Endothelial cell of umbilical vein (primary cell): ENCODE measurements at regions of chr11 and their contacts with region 1.

Region 1: DNA sequence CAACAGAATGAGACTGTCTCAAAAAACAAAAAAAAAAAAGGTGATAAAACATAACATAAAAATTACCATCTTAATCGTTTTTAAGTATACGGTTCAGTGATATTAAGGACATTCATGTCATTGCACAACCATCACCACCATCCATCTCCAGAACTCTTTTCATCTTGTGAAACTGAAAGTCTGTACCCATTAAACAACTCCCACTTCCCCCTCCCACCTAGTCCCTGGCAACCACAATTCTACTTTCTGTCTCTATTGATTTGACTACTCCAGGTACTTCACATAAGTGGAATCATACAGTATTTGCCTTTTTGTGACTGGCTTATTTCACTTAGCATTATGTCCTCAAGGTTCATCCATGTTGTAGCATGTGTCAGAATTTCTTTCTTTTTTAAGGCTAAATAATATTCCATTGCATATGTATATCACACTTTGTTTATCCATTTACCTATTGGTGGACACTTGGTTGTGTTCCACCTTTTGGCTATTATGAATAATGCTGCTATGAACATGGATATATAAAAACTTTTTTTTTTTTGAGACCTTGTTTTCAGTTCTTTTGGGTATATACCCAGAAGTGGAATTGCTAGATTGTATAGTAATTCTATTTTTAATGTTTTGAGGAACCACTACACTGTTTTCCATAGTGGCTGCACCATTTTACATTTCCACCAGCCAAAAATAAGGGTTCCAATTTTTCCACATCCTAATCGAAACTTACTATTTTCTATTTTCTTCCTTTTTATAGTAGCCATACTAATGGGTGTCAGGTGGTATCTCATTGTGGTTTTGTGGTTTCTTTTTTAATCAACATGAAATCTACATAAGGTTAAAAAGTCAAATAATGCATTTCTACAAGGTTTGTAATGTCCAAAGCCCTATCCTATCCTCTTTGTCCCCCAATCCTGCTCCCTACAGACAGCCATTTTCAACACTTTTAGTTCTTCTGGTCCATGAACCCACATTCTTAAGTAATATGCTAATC is 23.4 kb upstream of the PIK3C2A start:
- DNase-seq: no peak
- H3K4me3 ChIP-seq: no peak overlapping the region
- H3K27ac ChIP-seq: no peak overlapping the region
- H3K4me1 ChIP-seq: peaks cover 3% of the 10 kb centered on the region
- H3K27me3 ChIP-seq: no peaks in the 10 kb centered on the region
- CTCF ChIP-seq: no peak
- POLR2A ChIP-seq: no peak

Region 2: DNA sequence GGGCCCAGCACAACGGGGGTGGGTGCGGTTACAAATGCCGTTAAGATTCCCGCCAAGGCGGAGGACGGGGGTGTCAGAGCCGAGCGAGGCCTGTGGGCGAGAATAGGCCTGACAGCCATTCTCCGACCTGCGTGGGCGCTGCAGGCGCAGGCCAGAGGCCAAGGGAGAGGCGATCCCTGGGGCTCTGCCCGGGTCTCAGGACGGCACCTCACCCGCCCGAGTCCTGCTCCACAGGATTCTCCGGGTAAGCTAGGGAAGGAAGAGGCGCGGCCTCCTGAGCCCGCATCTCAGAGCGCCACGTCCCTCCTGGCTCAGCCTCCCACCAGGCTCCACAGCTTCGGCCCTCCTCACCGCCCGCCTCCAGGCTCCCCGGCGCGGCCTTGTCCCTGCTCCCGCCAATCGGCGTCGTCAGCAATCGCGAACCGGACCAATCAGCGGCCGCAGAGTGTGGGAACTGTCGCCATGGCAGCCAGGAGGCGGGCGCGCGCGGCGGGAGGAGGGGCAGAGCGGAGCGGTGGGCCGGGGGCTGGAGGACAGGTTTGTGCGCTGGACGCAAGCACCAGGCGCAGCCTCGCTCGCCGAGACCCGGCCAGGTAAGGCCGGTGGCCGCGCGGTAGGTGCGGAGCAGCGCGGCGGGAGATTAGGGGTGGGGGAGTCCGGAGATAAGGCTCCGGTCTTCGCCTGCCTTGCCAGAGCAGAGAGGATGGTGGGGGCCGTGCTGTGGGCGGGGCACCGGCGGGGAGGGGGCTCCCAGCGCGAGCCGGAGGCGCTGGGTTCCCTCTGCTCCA is 45.3 kb after region 1 on chr11 and contains the start of gene NUCB2:
- CTCF ChIA-PET with region 1: interaction called, 14 read pairs
- POLR2A ChIA-PET with region 1: no interaction called
- dilution Hi-C with region 1: no loop called
- intact Hi-C with region 1: loop called (anchors 1 kb)
- DNase-seq: peak; percentile 98
- H3K4me3 ChIP-seq: peak within 1 kb of the TSS; percentile 84 to 95 (median 95)
- H3K27ac ChIP-seq: peak within 1 kb of the TSS; percentile 65
- H3K4me1 ChIP-seq: peaks cover 11% of the 10 kb centered on the region
- H3K27me3 ChIP-seq: no peaks in the 10 kb centered on the region
- CTCF ChIP-seq: no peak
- POLR2A ChIP-seq: peak; percentile 97
- total RNA-seq, gene NUCB2: 114 and 123 TPM in 2 replicates

Region 3: DNA sequence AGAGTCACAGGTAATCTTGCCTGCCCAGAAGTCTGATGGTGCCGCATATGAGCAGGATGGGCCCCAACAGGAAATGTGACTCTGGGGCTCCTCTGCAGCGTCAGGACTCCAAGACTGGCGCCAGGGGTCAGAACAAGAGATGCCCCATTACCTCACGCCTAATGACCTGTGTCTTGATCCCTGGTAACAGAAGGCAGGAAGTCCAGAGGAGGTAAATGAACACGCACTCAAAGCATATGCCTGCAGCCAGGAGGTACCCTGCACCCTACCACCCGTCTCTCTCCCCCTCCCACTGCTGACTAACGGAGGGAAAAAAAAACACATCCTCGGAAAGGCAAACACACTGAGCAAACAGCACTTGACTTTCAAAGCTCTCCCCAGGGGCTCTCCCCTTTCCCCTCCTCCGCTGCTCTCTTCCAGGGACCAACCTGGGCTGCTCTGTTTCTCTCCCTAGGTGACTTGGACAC is 208.2 kb after region 1 on chr11:
- CTCF ChIA-PET with region 1: no interaction called
- POLR2A ChIA-PET with region 1: no interaction called
- dilution Hi-C with region 1: no loop called
- intact Hi-C with region 1: no loop called
- DNase-seq: no peak
- H3K4me3 ChIP-seq: no peak overlapping the region
- H3K27ac ChIP-seq: no peak overlapping the region
- H3K4me1 ChIP-seq: no peaks in the 10 kb centered on the region
- H3K27me3 ChIP-seq: peaks cover 0 to 6% of the 10 kb centered on the region in 2 experiments
- CTCF ChIP-seq: no peak
- POLR2A ChIP-seq: no peak